ENCODE measurements at regions of chr1 and their contacts with region 1.

Region 1: GRCh38 chr1:28088168-28088961 is at the start of gene EYA3:
- DNase-seq: peak; percentile 96 to 99 (median 99)
- ATAC-seq: peak; percentile 99
- H3K4me3 ChIP-seq: peak within 1 kb of the TSS; percentile 92
- H3K4me3 Mint-ChIP-seq: peak within 1 kb of the TSS; percentile 93 to 98 (median 97)
- H3K27ac ChIP-seq: peak within 1 kb of the TSS; percentile 82
- H3K27ac Mint-ChIP-seq: peak within 1 kb of the TSS; percentile 89 to 98 (median 94)
- H3K4me1 ChIP-seq: peaks cover 11 to 12% of the 10 kb centered on the region in 2 donors
- H3K4me1 Mint-ChIP-seq: peaks cover 30 to 56% (median 42%) of the 10 kb centered on the region in 7 donors
- H3K27me3 ChIP-seq: no peaks in the 10 kb centered on the region
- H3K27me3 Mint-ChIP-seq: peaks cover 0 to 8% (median 0%) of the 10 kb centered on the region in 5 donors
- total RNA-seq, gene EYA3: 14.5 to 31.7 (median 19.2) TPM

Region 2: GRCh38 chr1:27671964-27672749 is 416.2 kb before region 1 on chr1 and contains the start of gene IFI6:
- CTCF ChIA-PET with region 1: no interaction called
- POLR2A ChIA-PET with region 1: no interaction called
- intact Hi-C with region 1: loop called in 1 of 2 experiments (anchors 1 kb)
- DNase-seq: peak; percentile 42 to 86 (median 81)
- ATAC-seq: peak; percentile 94
- H3K4me3 ChIP-seq: peak within 1 kb of the TSS; percentile 50
- H3K4me3 Mint-ChIP-seq: peak within 1 kb of the TSS; percentile 89 to 98 (median 94)
- H3K27ac ChIP-seq: peak within 1 kb of the TSS; percentile 87
- H3K27ac Mint-ChIP-seq: peak within 1 kb of the TSS; percentile 90 to 99 (median 94)
- H3K4me1 ChIP-seq: peaks cover 21 to 23% of the 10 kb centered on the region in 2 donors
- H3K4me1 Mint-ChIP-seq: peaks cover 16 to 43% (median 41%) of the 10 kb centered on the region in 7 donors
- H3K27me3 ChIP-seq: no peaks in the 10 kb centered on the region
- H3K27me3 Mint-ChIP-seq: peaks cover 0 to 2% (median 0%) of the 10 kb centered on the region in 5 donors
- total RNA-seq, gene IFI6: 24.7 to 266 (median 33.2) TPM

Region 3: GRCh38 chr1:27830621-27831424 is 257.5 kb before region 1 on chr1 and contains the start of gene PPP1R8:
- CTCF ChIA-PET with region 1: no interaction called
- POLR2A ChIA-PET with region 1: no interaction called
- intact Hi-C with region 1: loop called in 1 of 2 experiments (anchors 1 kb)
- DNase-seq: peak; percentile 57 to 89 (median 86)
- ATAC-seq: peak; percentile 100
- H3K4me3 ChIP-seq: peak within 1 kb of the TSS; percentile 71
- H3K4me3 Mint-ChIP-seq: peak within 1 kb of the TSS; percentile 90 to 96 (median 93)
- H3K27ac ChIP-seq: peak within 1 kb of the TSS; percentile 92
- H3K27ac Mint-ChIP-seq: peak within 1 kb of the TSS; percentile 86 to 96 (median 92)
- H3K4me1 ChIP-seq: peaks cover 16% of the 10 kb centered on the region in 2 donors
- H3K4me1 Mint-ChIP-seq: peaks cover 16 to 51% (median 38%) of the 10 kb centered on the region in 7 donors
- H3K27me3 ChIP-seq: no peaks in the 10 kb centered on the region
- H3K27me3 Mint-ChIP-seq: no peaks in the 10 kb centered on the region
- total RNA-seq, gene PPP1R8: 17.5 to 60.2 (median 39.5) TPM

Region 4: DNA sequence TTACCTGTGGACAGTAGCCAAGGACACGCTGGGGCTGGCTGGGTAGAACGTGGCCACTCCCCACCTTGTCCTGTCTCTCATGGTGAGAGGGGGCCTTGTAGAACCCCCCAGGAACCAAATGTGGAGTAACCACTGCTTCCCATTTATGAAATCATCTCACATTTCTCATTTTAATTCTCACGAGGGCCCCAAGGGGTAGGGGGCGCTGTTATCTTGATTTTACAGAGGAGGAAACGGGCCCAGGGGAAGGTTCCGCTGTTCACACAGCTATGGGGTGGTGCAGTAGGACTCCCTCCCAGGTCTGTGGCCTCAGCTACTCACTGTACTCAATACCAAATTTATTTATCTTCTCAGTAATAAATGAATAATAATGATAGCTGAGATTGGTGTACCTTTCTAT is 148.1 kb before region 1 on chr1:
- CTCF ChIA-PET with region 1: interaction called, 5 read pairs
- POLR2A ChIA-PET with region 1: interaction called, 3 read pairs
- intact Hi-C with region 1: loop called in 1 of 2 experiments (anchors 2 kb)
- DNase-seq: peak; percentile 53 to 80 (median 78)
- ATAC-seq: peak; percentile 87
- H3K4me3 ChIP-seq: no peak overlapping the region
- H3K4me3 Mint-ChIP-seq: no peak overlapping the region
- H3K27ac ChIP-seq: peak overlapping the region; percentile 42
- H3K27ac Mint-ChIP-seq: peak overlapping the region; percentile 54 to 97 (median 90)
- H3K4me1 ChIP-seq: peaks cover 9 to 30% of the 10 kb centered on the region in 2 donors
- H3K4me1 Mint-ChIP-seq: peaks cover 31 to 53% (median 50%) of the 10 kb centered on the region in 7 donors
- H3K27me3 ChIP-seq: no peaks in the 10 kb centered on the region
- H3K27me3 Mint-ChIP-seq: peaks cover 0 to 8% (median 6%) of the 10 kb centered on the region in 5 donors

Region 5: GRCh38 chr1:28208818-28209441 is 120.6 kb after region 1 on chr1:
- CTCF ChIA-PET with region 1: interaction called, 32 read pairs
- POLR2A ChIA-PET with region 1: interaction called, 3 read pairs
- intact Hi-C with region 1: loop called (anchors 1 kb)
- DNase-seq: peak in 8 of 9 donors; percentile 43 to 67 (median 60)
- ATAC-seq: peak; percentile 85
- H3K4me3 ChIP-seq: no peak overlapping the region
- H3K4me3 Mint-ChIP-seq: no peak overlapping the region
- H3K27ac ChIP-seq: no peak overlapping the region
- H3K27ac Mint-ChIP-seq: peak overlapping the region in 3 of 9 donors; percentile 16 to 56 (median 45)
- H3K4me1 ChIP-seq: peaks cover 0 to 7% of the 10 kb centered on the region in 2 donors
- H3K4me1 Mint-ChIP-seq: peaks cover 6 to 13% (median 8%) of the 10 kb centered on the region in 7 donors
- H3K27me3 ChIP-seq: no peaks in the 10 kb centered on the region
- H3K27me3 Mint-ChIP-seq: no peaks in the 10 kb centered on the region

Region 6: DNA sequence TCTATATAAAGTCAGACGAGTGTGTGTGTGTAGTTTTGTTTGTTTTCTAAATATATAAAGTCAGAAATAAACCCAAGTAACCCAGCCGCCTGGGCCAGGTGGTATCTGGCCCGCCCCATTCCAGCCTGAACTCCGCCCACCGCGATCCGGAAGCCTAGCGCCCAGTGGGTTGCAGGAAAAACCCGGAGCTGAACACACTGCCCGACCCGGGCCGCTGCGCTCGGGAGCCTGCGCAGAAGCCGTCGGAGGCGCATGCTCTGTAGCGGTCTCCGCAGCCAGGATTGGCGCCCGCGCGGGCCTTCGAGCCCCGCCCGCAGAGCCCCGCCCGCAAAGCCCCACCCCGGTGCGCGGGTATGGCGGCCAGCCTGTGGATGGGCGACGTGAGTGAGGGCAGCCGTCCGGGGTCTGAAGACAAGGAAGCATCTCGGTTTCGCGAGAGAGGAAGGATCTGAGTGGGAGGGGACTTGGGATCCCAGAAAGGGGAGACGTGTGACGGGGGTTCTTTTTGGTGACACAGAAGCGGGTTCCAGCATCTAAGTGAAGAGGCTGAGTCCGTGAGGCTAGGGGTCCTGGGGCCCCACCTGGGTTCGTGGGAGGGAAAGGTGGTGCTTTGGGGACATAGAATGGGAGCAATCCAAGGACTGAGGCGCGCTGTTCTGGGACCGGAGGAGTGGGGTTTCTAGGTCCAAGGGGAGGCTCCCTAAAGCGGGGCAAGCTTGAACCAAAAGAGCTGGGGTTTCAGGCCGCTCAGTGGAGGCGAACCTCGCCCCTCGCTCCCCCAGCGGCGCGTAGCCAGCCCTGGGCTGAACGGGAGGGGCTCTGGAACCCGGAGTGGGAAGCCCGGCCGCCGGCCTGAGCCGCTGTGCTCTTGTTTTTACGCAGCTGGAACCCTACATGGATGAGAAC is 464.6 kb after region 1 on chr1 and contains the start of gene TRNAU1AP:
- CTCF ChIA-PET with region 1: no interaction called
- POLR2A ChIA-PET with region 1: no interaction called
- intact Hi-C with region 1: loop called in 1 of 2 experiments (anchors 1 kb)
- DNase-seq: peak; percentile 92 to 98 (median 97)
- ATAC-seq: peak; percentile 98
- H3K4me3 ChIP-seq: peak within 1 kb of the TSS; percentile 95
- H3K4me3 Mint-ChIP-seq: peak within 1 kb of the TSS; percentile 94 to 99 (median 98)
- H3K27ac ChIP-seq: peak within 1 kb of the TSS; percentile 81
- H3K27ac Mint-ChIP-seq: peak within 1 kb of the TSS; percentile 94 to 99 (median 98)
- H3K4me1 ChIP-seq: peaks cover 0 to 15% of the 10 kb centered on the region in 2 donors
- H3K4me1 Mint-ChIP-seq: peaks cover 10 to 26% (median 19%) of the 10 kb centered on the region in 7 donors
- H3K27me3 ChIP-seq: no peaks in the 10 kb centered on the region
- H3K27me3 Mint-ChIP-seq: no peaks in the 10 kb centered on the region
- total RNA-seq, gene TRNAU1AP: 27.6 to 52.5 (median 40.9) TPM